ENCODE measurements at regions of chr10 and their contacts with region 1.

Region 1: GRCh38 chr10:11663763-11664555 is 52.5 kb upstream of the USP6NL start:
- DNase-seq: peak; percentile 70
- ATAC-seq: peak; percentile 70
- H3K4me3 ChIP-seq: peak overlapping the region in 4 of 5 experiments; percentile 10 to 41 (median 25)
- H3K4me3 Mint-ChIP-seq: peak overlapping the region; percentile 87
- H3K27ac ChIP-seq: peak overlapping the region; percentile 63 to 89
- H3K27ac Mint-ChIP-seq: peak overlapping the region; percentile 97
- H3K4me1 ChIP-seq: peaks cover 82 to 87% of the 10 kb centered on the region in 2 donors
- H3K4me1 Mint-ChIP-seq: peaks cover 82% of the 10 kb centered on the region
- H3K27me3 ChIP-seq: no peaks in the 10 kb centered on the region
- H3K27me3 Mint-ChIP-seq: no peaks in the 10 kb centered on the region
- CTCF ChIP-seq: no peak

Region 2: GRCh38 chr10:11548768-11549099 is 115.2 kb before region 1 on chr10:
- CTCF ChIA-PET with region 1: no interaction called
- POLR2A ChIA-PET with region 1: no interaction called
- intact Hi-C with region 1: no loop called
- DNase-seq: peak; percentile 52
- ATAC-seq: peak; percentile 19
- H3K4me3 ChIP-seq: no peak overlapping the region
- H3K4me3 Mint-ChIP-seq: peak overlapping the region; percentile 64
- H3K27ac ChIP-seq: peak overlapping the region; percentile 7 to 82
- H3K27ac Mint-ChIP-seq: peak overlapping the region; percentile 26
- H3K4me1 ChIP-seq: peaks cover 54 to 70% of the 10 kb centered on the region in 2 donors
- H3K4me1 Mint-ChIP-seq: peaks cover 84% of the 10 kb centered on the region
- H3K27me3 ChIP-seq: no peaks in the 10 kb centered on the region
- H3K27me3 Mint-ChIP-seq: no peaks in the 10 kb centered on the region
- CTCF ChIP-seq: no peak

Region 3: DNA sequence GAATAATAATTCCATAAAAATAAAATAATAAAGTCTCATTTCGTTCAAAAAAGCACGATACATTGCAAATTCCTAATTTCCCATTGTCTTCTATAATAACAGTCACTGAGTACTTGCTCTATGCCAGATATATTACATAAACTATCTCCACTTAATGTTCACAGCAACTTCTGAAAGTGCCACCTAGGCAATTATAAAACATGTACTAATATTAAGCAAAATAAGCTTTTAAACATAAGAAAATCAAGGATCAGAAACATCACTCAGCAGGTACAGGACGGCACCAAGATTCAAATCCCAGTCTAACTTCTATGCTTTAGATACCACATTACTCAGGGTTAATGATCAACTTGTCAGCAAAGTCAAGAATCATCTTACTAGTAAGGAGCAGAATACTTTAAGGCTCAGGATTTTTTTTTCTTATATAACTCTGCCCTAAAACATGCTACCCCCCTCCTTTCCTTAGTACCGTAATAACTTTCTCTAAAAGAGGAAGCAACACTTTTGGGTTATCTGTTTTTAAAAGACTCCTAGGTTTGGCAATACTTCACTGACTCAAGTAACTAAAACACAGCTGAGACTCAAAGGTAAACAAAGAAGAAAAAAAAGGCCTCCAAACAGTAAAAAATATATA is 103.8 kb before region 1 on chr10:
- CTCF ChIA-PET with region 1: no interaction called
- POLR2A ChIA-PET with region 1: interaction called, 3 read pairs
- intact Hi-C with region 1: loop called (anchors 5 kb)
- DNase-seq: peak; percentile 80
- ATAC-seq: peak; percentile 83
- H3K4me3 ChIP-seq: peak overlapping the region in 4 of 5 experiments; percentile 2 to 25 (median 10)
- H3K4me3 Mint-ChIP-seq: peak overlapping the region; percentile 73
- H3K27ac ChIP-seq: peak overlapping the region; percentile 87 to 93
- H3K27ac Mint-ChIP-seq: peak overlapping the region; percentile 95
- H3K4me1 ChIP-seq: peaks cover 53 to 78% of the 10 kb centered on the region in 2 donors
- H3K4me1 Mint-ChIP-seq: peaks cover 81% of the 10 kb centered on the region
- H3K27me3 ChIP-seq: no peaks in the 10 kb centered on the region
- H3K27me3 Mint-ChIP-seq: no peaks in the 10 kb centered on the region
- CTCF ChIP-seq: no peak

Region 4: GRCh38 chr10:11631890-11632587 is 31.9 kb before region 1 on chr10:
- CTCF ChIA-PET with region 1: interaction called, 5 read pairs
- POLR2A ChIA-PET with region 1: interaction called, 3 read pairs
- intact Hi-C with region 1: loop called (anchors 2 kb)
- DNase-seq: peak; percentile 82
- ATAC-seq: peak; percentile 96
- H3K4me3 ChIP-seq: peak overlapping the region in 3 of 5 experiments; percentile 13 to 43 (median 16)
- H3K4me3 Mint-ChIP-seq: peak overlapping the region; percentile 71
- H3K27ac ChIP-seq: peak overlapping the region; percentile 71 to 77
- H3K27ac Mint-ChIP-seq: peak overlapping the region; percentile 94
- H3K4me1 ChIP-seq: peaks cover 29 to 36% of the 10 kb centered on the region in 2 donors
- H3K4me1 Mint-ChIP-seq: peaks cover 58% of the 10 kb centered on the region
- H3K27me3 ChIP-seq: no peaks in the 10 kb centered on the region
- H3K27me3 Mint-ChIP-seq: no peaks in the 10 kb centered on the region
- CTCF ChIP-seq: no peak

Region 5: GRCh38 chr10:11647676-11648075 is 16.3 kb before region 1 on chr10:
- CTCF ChIA-PET with region 1: interaction called, 3 read pairs
- POLR2A ChIA-PET with region 1: no interaction called
- intact Hi-C with region 1: loop called (anchors 2 kb)
- DNase-seq: no peak
- ATAC-seq: no peak
- H3K4me3 ChIP-seq: no peak overlapping the region
- H3K4me3 Mint-ChIP-seq: no peak overlapping the region
- H3K27ac ChIP-seq: no peak overlapping the region
- H3K27ac Mint-ChIP-seq: no peak overlapping the region
- H3K4me1 ChIP-seq: peaks cover 0 to under 1% of the 10 kb centered on the region in 2 donors
- H3K4me1 Mint-ChIP-seq: peaks cover 10% of the 10 kb centered on the region
- H3K27me3 ChIP-seq: no peaks in the 10 kb centered on the region
- H3K27me3 Mint-ChIP-seq: no peaks in the 10 kb centered on the region
- CTCF ChIP-seq: no peak

Region 6: DNA sequence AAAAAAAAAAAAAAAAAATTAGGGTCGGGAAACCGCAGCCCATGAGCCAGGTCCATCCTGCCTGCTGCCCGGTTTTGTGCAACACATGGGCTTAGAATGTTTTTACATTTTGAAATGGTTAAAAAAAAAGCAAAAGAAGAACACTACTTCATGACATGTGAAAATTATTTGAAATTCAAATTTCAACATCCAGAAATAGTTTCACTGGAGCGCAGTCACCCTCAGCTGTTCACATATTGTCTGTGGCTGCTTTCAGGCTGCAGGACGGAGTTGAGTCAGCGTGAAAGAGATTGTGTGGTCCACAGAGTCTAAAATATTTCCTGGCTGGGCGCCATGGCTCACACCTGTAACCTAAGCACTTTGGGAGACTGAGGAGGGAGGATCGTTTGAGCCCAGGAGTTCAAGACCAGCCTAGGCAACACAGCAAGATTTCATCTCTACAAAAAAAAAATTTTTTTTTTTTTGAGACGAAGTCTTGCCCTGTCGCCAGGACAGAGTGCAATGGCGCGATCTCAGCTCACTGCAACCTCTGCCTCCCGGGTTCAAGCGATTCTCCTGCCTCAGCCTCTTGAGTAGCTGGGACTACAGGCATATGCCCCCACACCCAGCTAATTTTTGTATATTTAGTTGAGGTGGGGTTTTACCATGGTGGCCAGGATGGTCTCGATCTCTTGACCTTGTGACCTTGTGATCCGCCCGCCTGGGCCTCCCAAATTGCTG is 14.3 kb after region 1 on chr10:
- CTCF ChIA-PET with region 1: interaction called, 4 read pairs
- POLR2A ChIA-PET with region 1: interaction called, 6 read pairs
- intact Hi-C with region 1: loop called (anchors 1 kb)
- DNase-seq: peak; percentile 78
- ATAC-seq: peak; percentile 83
- H3K4me3 ChIP-seq: peak overlapping the region in 3 of 5 experiments; percentile 3 to 33 (median 30)
- H3K4me3 Mint-ChIP-seq: peak overlapping the region; percentile 85
- H3K27ac ChIP-seq: peak overlapping the region; percentile 25 to 35
- H3K27ac Mint-ChIP-seq: peak overlapping the region; percentile 92
- H3K4me1 ChIP-seq: peaks cover 94 to 97% of the 10 kb centered on the region in 2 donors
- H3K4me1 Mint-ChIP-seq: peaks cover 87% of the 10 kb centered on the region
- H3K27me3 ChIP-seq: no peaks in the 10 kb centered on the region
- H3K27me3 Mint-ChIP-seq: no peaks in the 10 kb centered on the region
- CTCF ChIP-seq: no peak

Region 7: DNA sequence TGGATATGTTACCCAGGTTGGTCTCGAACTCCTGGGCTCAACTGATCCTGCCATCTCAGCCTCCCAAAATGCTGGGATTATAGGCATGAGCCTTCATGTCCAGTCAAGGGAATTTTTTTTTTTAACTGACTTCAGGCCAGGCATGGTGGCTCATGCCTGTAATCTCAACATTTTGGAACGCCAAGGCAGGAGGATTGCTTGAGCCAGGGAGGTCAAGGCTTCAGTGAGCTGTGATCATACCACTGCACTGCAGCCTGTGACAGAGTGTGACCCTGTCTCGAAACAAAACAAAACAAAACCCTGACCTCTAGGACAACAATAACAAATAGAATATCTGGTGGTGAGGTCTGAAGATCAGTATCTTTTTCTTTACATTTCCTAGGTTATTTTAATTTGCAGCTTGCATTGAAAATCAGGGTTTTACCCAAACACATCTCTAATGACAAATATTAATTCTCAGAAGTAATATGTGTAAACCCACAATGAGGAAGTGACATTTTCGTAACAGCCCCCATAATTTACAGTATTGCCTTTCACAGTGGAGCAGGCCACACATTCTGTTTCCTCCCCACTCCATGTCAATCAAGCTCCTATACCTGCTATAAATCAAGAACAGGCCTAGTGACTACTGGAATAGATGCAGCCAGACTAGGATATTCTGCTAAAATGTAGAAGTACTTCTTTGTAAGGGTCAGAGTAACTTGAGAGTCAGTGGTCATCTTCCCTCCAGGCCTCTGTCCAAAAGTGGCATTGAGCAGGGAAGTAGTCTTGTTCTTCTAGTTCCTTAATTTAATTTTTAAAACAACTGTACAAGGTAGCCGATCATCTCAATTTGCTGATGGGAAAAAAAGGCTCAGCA is 35.0 kb after region 1 on chr10:
- CTCF ChIA-PET with region 1: no interaction called
- POLR2A ChIA-PET with region 1: no interaction called
- intact Hi-C with region 1: loop called (anchors 5 kb)
- DNase-seq: peak; percentile 71
- ATAC-seq: peak; percentile 75
- H3K4me3 ChIP-seq: peak overlapping the region in 1 of 5 experiments; percentile 8
- H3K4me3 Mint-ChIP-seq: peak overlapping the region; percentile 46
- H3K27ac ChIP-seq: peak overlapping the region; percentile 25 to 70
- H3K27ac Mint-ChIP-seq: peak overlapping the region; percentile 73
- H3K4me1 ChIP-seq: peaks cover 41 to 64% of the 10 kb centered on the region in 2 donors
- H3K4me1 Mint-ChIP-seq: peaks cover 60% of the 10 kb centered on the region
- H3K27me3 ChIP-seq: no peaks in the 10 kb centered on the region
- H3K27me3 Mint-ChIP-seq: no peaks in the 10 kb centered on the region
- CTCF ChIP-seq: no peak

Region 8: GRCh38 chr10:11713186-11713743 is 49.3 kb after region 1 on chr10:
- CTCF ChIA-PET with region 1: interaction called, 4 read pairs
- POLR2A ChIA-PET with region 1: no interaction called
- intact Hi-C with region 1: loop called (anchors 5 kb)
- DNase-seq: peak; percentile 34
- ATAC-seq: no peak
- H3K4me3 ChIP-seq: no peak overlapping the region
- H3K4me3 Mint-ChIP-seq: peak overlapping the region; percentile 18
- H3K27ac ChIP-seq: no peak overlapping the region
- H3K27ac Mint-ChIP-seq: peak overlapping the region; percentile 24
- H3K4me1 ChIP-seq: peaks cover 42 to 61% of the 10 kb centered on the region in 2 donors
- H3K4me1 Mint-ChIP-seq: peaks cover 51% of the 10 kb centered on the region
- H3K27me3 ChIP-seq: no peaks in the 10 kb centered on the region
- H3K27me3 Mint-ChIP-seq: no peaks in the 10 kb centered on the region
- CTCF ChIP-seq: no peak

Region 9: GRCh38 chr10:11813855-11814567 is 150.1 kb after region 1 on chr10:
- CTCF ChIA-PET with region 1: no interaction called
- POLR2A ChIA-PET with region 1: no interaction called
- intact Hi-C with region 1: no loop called
- DNase-seq: no peak
- ATAC-seq: no peak
- H3K4me3 ChIP-seq: no peak overlapping the region
- H3K4me3 Mint-ChIP-seq: no peak overlapping the region
- H3K27ac ChIP-seq: no peak overlapping the region
- H3K27ac Mint-ChIP-seq: no peak overlapping the region
- H3K4me1 ChIP-seq: no peaks in the 10 kb centered on the region
- H3K4me1 Mint-ChIP-seq: no peaks in the 10 kb centered on the region
- H3K27me3 ChIP-seq: no peaks in the 10 kb centered on the region
- H3K27me3 Mint-ChIP-seq: peaks cover 12% of the 10 kb centered on the region
- CTCF ChIP-seq: no peak

Region 10: DNA sequence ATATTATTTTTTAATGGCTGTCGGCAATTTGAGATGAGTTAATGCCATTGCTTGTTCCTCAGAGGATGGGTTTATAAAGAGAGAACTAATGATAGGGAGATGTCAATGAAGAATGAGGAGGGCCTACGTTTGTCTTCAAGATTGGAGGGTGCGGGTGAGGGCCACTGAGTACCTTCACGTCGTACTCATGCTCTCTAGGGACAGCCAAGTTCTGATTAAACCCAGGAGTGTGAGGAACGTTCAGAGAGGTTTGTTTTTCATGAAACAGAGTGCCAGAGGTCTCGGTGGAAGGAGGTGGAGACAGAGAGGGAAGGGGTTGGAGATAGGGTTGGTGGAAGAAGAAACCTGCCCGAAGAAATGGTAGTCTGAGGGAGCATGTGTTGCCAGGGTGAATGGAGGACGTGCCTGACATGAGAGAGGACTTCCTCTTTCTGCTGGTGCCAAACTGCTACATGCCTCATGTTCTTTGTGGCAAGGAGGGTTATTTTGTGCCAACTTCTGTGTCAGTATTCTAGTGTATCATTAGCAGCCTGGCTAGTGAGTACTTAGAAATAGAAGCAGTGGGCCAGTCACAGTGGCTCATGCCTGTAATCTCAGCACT is 413.7 kb after region 1 on chr10:
- CTCF ChIA-PET with region 1: no interaction called
- POLR2A ChIA-PET with region 1: no interaction called
- intact Hi-C with region 1: no loop called
- DNase-seq: peak; percentile 81
- ATAC-seq: peak; percentile 73
- H3K4me3 ChIP-seq: no peak overlapping the region
- H3K4me3 Mint-ChIP-seq: peak overlapping the region; percentile 72
- H3K27ac ChIP-seq: peak overlapping the region; percentile 90
- H3K27ac Mint-ChIP-seq: peak overlapping the region; percentile 97
- H3K4me1 ChIP-seq: peaks cover 46 to 64% of the 10 kb centered on the region in 2 donors
- H3K4me1 Mint-ChIP-seq: peaks cover 54% of the 10 kb centered on the region
- H3K27me3 ChIP-seq: no peaks in the 10 kb centered on the region
- H3K27me3 Mint-ChIP-seq: no peaks in the 10 kb centered on the region
- CTCF ChIP-seq: no peak